Heart right ventricle (tissue), 16 donors: ENCODE measurements at regions of chr10 and their contacts with region 1.

Region 1: GRCh38 chr10:91493313-91493712 is 83.2 kb downstream of the HECTD2 start:
- DNase-seq: no peak
- ATAC-seq: no peak
- H3K4me3 ChIP-seq: no peak overlapping the region
- H3K27ac ChIP-seq: no peak overlapping the region
- H3K4me1 ChIP-seq: no peaks in the 10 kb centered on the region
- H3K27me3 ChIP-seq: no peaks in the 10 kb centered on the region
- CTCF ChIP-seq: peak in 8 of 9 donors; percentile 35 to 72 (median 55)

Region 2: DNA sequence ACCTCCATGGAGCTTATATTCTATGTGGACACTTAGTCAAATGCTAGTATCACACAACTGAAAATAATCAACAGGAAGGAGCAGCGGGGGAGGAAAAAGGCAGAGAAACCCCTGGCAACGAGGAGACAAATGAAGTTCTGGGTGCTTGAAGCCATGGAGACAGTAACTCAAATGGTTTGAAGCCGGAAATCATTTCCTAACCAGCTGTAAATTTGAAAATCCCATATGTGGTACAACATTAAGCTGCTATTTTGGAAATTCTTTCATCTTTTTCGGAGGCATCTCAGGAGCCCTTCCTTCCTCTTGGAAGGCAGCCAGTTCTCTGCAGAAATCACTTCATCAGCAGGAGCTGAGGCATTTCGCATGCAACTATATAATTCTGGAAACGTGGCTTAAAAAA is 48.2 kb after region 1 on chr10:
- intact Hi-C with region 1: loop called in 1 of 10 experiments (anchors 10 kb)
- DNase-seq: no peak
- ATAC-seq: peak in 5 of 8 donors; percentile 14 to 58 (median 37)
- H3K4me3 ChIP-seq: no peak overlapping the region
- H3K27ac ChIP-seq: no peak overlapping the region
- H3K4me1 ChIP-seq: peaks cover 0 to 23% (median 6%) of the 10 kb centered on the region in 9 donors
- H3K27me3 ChIP-seq: no peaks in the 10 kb centered on the region
- CTCF ChIP-seq: no peak

Region 3: DNA sequence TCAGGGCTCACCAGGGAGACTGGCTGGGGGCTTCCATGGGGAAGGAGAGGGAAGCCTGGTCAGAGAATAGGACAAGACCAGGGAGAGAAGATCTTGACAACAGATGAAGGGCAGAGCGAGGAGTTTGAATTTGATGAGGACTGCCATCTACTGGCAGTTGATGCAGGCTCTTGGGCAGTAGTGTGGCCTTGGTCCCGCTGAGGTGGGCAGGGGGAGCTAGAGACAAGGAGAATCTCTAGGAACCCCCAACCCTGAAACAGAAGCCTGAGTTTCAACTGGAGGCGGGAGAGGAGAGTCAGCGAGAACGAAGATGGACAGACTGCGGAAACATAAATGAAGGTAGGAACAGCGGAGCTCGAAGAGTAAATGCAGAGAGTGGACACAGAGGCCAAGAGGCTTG is 58.5 kb after region 1 on chr10:
- intact Hi-C with region 1: loop called in 6 of 10 experiments (anchors 5 to 10 kb)
- DNase-seq: peak; percentile 38 to 62
- ATAC-seq: peak; percentile 75 to 93 (median 86)
- H3K4me3 ChIP-seq: peak overlapping the region in 8 of 10 donors; percentile 3 to 44 (median 32)
- H3K27ac ChIP-seq: peak overlapping the region in 5 of 10 donors; percentile 23 to 55 (median 42)
- H3K4me1 ChIP-seq: peaks cover 0 to 24% (median 3%) of the 10 kb centered on the region in 9 donors
- H3K27me3 ChIP-seq: no peaks in the 10 kb centered on the region
- CTCF ChIP-seq: peak in 8 of 9 donors; percentile 36 to 84 (median 73)

Region 4: GRCh38 chr10:91745074-91745832 is 251.9 kb after region 1 on chr10:
- intact Hi-C with region 1: loop called in 1 of 10 experiments (anchors 10 kb)
- DNase-seq: no peak
- ATAC-seq: peak in 7 of 8 donors; percentile 25 to 79 (median 58)
- H3K4me3 ChIP-seq: no peak overlapping the region
- H3K27ac ChIP-seq: no peak overlapping the region
- H3K4me1 ChIP-seq: no peaks in the 10 kb centered on the region
- H3K27me3 ChIP-seq: peaks cover 0 to 33% (median 5%) of the 10 kb centered on the region in 7 donors
- CTCF ChIP-seq: peak in 6 of 9 donors; percentile 11 to 39 (median 34)